ENCODE measurements at regions of chr16 and their contacts with region 1.

Region 1: DNA sequence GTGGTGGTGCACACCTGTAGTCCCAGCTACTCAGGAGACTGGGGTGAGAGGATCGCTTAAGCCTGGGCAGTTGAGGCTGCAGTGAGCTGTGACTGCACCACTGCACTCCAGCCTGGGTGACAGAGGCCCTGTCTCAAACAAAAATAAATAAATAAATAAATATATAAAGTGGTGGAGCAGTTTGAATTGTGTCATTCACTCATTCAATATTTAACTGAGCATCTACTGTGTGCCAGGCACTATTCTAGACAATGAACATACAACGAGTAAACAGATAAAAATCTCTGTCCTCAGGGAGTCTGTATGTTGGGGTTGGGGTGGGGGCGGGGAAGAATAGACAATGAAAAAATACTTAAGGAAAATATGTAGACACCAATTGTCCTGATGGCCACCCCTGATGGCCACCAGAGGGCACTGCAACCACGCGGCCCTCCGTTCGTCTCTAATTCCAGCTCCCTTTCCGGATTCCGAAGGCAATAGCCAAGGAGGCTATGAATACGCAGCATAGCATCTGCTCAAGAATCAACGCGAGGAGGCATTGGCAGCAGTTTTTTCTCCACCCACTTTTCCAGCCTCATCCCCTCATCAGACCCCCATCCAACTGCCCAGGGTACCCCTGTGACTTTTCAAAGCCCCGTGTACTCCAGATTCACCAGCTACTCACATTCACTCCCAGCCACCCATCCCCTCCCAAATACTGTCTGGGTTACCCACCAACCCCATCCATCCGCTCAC is 21.4 kb downstream of the QPRT start:
- DNase-seq: peak; percentile 80
- ATAC-seq: peak; percentile 30
- H3K4me3 Mint-ChIP-seq: peak overlapping the region; percentile 24
- H3K27ac Mint-ChIP-seq: peak overlapping the region; percentile 70
- H3K4me1 Mint-ChIP-seq: peaks cover 38% of the 10 kb centered on the region
- H3K27me3 Mint-ChIP-seq: no peaks in the 10 kb centered on the region

Region 2: DNA sequence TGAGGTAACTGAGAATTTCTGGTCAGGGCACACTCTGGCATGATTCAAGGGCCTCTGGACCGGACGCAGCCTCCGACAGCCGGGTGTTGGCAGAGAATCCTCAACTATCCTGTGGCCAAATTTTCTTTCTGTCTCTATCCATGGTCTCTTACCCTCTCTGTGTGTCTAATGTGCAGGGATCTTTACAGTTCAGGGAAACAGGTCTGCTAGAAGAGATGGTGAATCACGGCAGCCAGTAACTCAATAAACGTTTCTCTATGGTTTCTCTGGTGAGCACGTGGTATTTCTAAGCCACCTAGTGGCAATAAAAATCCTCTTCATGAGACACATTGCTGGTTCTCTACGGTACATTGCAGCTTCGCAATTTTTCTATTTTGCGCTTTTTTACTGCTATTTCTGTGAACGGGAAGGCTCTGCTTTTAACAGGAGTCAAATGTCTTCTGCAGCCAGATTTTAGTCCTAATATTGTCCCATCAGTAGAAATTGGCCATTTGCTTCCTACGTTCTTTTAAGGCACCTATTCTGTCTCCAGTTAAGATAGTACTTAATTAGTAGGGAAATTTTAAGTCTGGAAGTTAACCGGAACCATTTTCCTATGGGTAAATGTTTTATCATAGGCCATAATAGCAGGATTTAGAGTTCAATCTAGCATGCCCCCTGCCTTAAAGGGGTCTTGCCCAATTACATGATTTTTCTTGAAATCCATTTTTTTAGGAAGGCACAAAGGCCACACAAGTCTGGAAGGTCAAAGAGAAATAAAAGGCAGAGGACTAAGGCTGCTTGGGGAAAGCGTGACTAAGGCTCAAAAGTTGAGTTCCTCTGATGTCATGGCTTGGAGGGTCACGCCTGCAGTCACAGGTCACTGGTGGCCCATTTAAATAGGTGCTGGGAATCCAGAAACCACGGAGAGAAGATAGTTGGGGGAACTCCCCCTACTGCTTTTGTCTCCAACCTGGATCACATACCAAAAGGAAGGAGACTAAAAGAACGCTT is 10.1 kb after region 1 on chr16:
- CTCF ChIA-PET with region 1: interaction called, 14 read pairs
- POLR2A ChIA-PET with region 1: no interaction called
- DNase-seq: peak; percentile 64
- ATAC-seq: peak; percentile 97
- H3K4me3 Mint-ChIP-seq: no peak overlapping the region
- H3K27ac Mint-ChIP-seq: no peak overlapping the region
- H3K4me1 Mint-ChIP-seq: peaks cover 12% of the 10 kb centered on the region
- H3K27me3 Mint-ChIP-seq: peaks cover 8% of the 10 kb centered on the region

Region 3: DNA sequence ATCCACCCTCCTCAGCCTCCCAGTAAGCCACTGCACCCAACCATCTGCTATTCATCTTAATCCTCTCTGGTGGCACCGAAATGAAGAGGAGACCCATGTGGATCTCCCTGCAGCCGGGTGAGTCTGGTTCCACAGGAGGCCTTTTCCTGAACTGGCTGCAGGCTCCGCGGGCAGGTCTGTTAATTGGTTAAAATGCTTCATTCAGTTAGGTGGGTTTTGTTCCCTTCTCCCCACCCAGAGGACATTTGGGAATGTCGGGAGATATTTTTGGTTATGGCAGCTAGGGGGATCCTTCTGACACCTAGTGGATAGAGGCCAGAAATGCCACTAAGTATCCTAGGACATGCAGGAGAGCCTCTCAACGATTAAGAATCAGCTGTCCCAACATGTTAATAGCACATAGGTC is 28.7 kb after region 1 on chr16:
- CTCF ChIA-PET with region 1: interaction called, 16 read pairs
- POLR2A ChIA-PET with region 1: no interaction called
- DNase-seq: no peak
- ATAC-seq: no peak
- H3K4me3 Mint-ChIP-seq: no peak overlapping the region
- H3K27ac Mint-ChIP-seq: no peak overlapping the region
- H3K4me1 Mint-ChIP-seq: peaks cover 33% of the 10 kb centered on the region
- H3K27me3 Mint-ChIP-seq: peaks cover 6% of the 10 kb centered on the region

Region 4: GRCh38 chr16:29760567-29761279 is 60.3 kb after region 1 on chr16:
- CTCF ChIA-PET with region 1: no interaction called
- POLR2A ChIA-PET with region 1: no interaction called
- DNase-seq: no peak
- ATAC-seq: peak; percentile 36
- H3K4me3 Mint-ChIP-seq: no peak overlapping the region
- H3K27ac Mint-ChIP-seq: no peak overlapping the region
- H3K4me1 Mint-ChIP-seq: peaks cover 7% of the 10 kb centered on the region
- H3K27me3 Mint-ChIP-seq: peaks cover 3% of the 10 kb centered on the region

Region 5: DNA sequence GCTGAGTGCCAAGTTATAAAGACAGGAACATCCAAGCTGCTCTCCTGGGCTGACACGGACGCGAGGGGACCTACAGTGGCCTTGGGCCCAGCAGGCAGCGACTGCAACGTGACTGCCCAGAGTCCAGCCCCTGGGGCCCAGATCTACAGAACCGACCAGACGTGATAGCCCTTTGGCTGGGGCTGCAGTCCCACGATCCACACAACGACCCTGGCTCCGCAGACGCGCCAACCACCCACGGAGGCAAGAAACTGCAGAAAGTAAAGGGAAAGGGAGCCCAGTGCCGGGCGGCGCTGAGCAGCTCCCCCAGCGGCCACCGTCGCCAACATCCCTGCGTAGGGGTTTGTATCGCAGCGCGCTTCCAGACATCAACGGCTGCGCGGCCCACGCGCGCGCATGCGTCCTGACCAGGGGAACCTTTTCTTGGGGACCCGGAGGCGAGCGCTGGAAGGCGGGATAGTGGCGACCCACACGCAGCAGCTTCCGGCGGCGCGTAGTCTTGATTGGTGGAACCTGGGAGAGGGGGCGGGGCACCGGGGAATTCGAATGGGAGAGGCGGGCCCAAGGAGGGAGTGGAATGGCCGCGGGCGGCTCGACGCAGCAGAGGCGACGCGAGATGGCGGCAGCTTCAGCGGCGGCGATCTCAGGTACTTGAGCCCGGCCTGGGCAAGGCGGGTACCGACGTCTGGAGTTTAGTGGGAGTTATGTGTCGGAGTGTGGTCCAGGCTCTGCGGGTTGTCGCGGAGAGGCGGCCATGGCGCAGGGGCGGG is 89.9 kb after region 1 on chr16 and contains the start of gene KIF22:
- CTCF ChIA-PET with region 1: interaction called, 64 read pairs
- POLR2A ChIA-PET with region 1: interaction called, 25 read pairs
- DNase-seq: peak; percentile 100
- ATAC-seq: peak; percentile 97
- H3K4me3 Mint-ChIP-seq: peak within 1 kb of the TSS; percentile 100
- H3K27ac Mint-ChIP-seq: peak within 1 kb of the TSS; percentile 96
- H3K4me1 Mint-ChIP-seq: peaks cover 44% of the 10 kb centered on the region
- H3K27me3 Mint-ChIP-seq: no peaks in the 10 kb centered on the region
- total RNA-seq, gene KIF22: 229 to 233 TPM

Region 6: DNA sequence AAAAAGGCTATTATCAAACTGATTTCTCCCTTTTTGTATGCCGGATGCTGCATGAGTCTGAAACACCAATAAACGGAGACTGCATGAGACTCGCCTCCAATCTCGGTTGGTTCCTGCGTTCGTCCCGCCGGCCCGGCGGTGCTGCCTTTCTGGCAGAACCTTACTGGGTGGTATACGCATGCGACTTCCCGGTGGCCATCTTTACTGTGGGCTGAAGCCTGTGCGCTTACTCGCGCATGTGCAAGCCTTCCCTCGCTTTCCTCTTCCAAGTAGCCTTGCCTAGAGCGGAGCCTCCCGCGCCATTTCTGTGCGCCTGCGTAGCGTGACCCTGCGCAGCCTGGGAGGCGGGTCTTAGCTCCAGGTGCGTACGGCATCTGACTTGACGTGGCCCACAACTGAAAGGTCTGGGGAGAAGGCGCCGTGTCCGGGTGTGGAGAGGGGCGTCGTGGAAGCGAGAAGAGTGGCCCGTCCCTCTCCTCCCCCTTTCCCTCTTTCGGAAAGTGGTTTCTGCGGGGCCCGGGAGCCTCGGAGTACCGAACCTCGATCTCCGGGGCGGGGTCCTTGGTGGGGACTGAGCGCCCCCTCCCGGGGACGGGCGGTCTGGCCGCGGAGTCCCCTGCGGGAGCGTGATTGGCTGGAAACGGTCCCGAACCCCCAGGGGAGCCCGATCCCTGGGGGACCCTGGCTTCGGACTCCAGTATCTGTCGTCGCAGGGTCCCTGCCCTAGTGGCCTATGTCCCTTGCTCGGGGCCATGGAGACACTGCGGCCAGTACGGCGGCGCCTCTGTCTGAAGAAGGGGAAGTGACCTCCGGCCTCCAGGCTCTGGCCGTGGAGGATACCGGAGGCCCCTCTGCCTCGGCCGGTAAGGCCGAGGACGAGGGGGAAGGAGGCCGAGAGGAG is 115.6 kb after region 1 on chr16 and contains the start of gene PAGR1:
- CTCF ChIA-PET with region 1: interaction called, 77 read pairs
- POLR2A ChIA-PET with region 1: interaction called, 4 read pairs
- DNase-seq: peak; percentile 99
- ATAC-seq: peak; percentile 76
- H3K4me3 Mint-ChIP-seq: peak within 1 kb of the TSS; percentile 98
- H3K27ac Mint-ChIP-seq: peak within 1 kb of the TSS; percentile 92
- H3K4me1 Mint-ChIP-seq: peaks cover 70% of the 10 kb centered on the region
- H3K27me3 Mint-ChIP-seq: peaks cover 8% of the 10 kb centered on the region
- total RNA-seq, gene PAGR1: 39.1 TPM

Region 7: GRCh38 chr16:29900102-29900887 is 199.9 kb after region 1 on chr16 and contains the start of gene ASPHD1:
- CTCF ChIA-PET with region 1: interaction called, 10 read pairs
- POLR2A ChIA-PET with region 1: no interaction called
- DNase-seq: no peak
- ATAC-seq: peak; percentile 88
- H3K4me3 Mint-ChIP-seq: peak within 1 kb of the TSS; percentile 67
- H3K27ac Mint-ChIP-seq: no peak within 1 kb of the TSS
- H3K4me1 Mint-ChIP-seq: peaks cover 12% of the 10 kb centered on the region
- H3K27me3 Mint-ChIP-seq: peaks cover 24% of the 10 kb centered on the region
- total RNA-seq, gene ASPHD1: 0.24 TPM in 1 of 2 experiments, not detected in the other